Activated CD8-positive, alpha-beta T cell treated with anti-CD3 and anti-CD28 coated beads for 36 hours (primary cell): ENCODE measurements at regions of chr1 and their contacts with region 1.

Region 1: DNA sequence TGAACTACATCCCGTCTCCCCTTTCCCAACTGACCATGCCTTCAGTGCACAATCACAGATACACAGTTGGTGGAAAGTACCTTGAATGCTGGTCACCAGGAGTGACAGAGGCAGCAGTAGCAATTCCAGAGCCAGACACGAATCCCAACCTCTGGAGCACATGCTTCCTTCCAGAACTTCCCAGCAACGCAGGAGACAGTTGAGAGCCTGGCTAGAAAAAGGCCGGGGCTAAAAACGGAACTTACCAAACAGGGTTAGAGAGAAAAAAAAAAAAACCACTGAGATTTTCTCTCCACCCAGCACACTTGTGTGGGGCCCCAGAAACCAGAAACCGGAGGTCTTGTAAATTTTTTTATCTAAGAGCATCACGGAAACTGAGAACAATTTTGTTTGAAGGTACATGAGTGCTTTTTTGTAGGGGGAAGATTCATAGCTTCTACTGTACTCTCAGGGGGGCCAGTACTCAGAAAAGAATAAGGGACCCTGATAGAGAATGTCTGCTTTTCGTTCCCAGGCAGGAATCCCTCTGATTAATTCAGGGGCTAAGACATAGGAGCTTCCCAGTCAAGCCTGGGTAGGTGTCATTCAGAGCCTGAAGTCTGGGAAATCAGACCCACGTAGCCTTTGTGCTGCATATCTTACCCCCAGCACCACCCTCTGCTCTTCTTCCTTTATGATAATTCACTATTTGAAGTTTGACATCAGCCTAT is at the start of gene CD48:
- DNase-seq: peak; percentile 75
- ATAC-seq: peak; percentile 37
- H3K4me3 Mint-ChIP-seq: no peak within 1 kb of the TSS
- H3K27ac Mint-ChIP-seq: no peak within 1 kb of the TSS
- H3K4me1 Mint-ChIP-seq: peaks cover 37% of the 10 kb centered on the region
- H3K27me3 Mint-ChIP-seq: no peaks in the 10 kb centered on the region
- CTCF ChIP-seq: no peak
- total RNA-seq, gene CD48: 379 to 388 TPM

Region 2: GRCh38 chr1:160590488-160590887 is 121.3 kb before region 1 on chr1:
- CTCF ChIA-PET with region 1: no interaction called
- POLR2A ChIA-PET with region 1: no interaction called
- intact Hi-C with region 1: no loop called
- DNase-seq: peak; percentile 38
- ATAC-seq: no peak
- H3K4me3 Mint-ChIP-seq: no peak overlapping the region
- H3K27ac Mint-ChIP-seq: no peak overlapping the region
- H3K4me1 Mint-ChIP-seq: peaks cover 12% of the 10 kb centered on the region
- H3K27me3 Mint-ChIP-seq: no peaks in the 10 kb centered on the region
- CTCF ChIP-seq: no peak

Region 3: DNA sequence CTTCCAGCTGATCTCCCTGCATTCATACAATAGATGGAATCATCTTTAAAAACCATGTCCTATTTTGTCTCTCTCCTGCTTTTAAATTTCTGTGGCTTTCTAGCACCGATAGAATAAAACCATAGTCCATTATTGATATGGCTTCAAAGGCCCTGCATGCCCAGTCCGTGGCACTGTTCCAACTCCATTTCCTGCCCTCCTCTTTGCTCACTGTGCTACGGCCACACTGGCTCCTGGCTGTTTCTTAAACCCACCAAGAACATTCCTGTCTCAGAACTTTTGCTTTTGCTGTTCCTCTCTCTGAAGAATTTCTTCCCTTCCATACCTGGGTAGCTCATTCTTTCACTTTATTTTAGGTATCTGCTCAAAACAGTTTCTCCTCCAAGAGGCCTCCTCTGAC is 72.1 kb before region 1 on chr1:
- CTCF ChIA-PET with region 1: no interaction called
- POLR2A ChIA-PET with region 1: interaction called, 3 read pairs
- intact Hi-C with region 1: loop called (anchors 5 kb)
- DNase-seq: no peak
- ATAC-seq: no peak
- H3K4me3 Mint-ChIP-seq: peak overlapping the region; percentile 74
- H3K27ac Mint-ChIP-seq: peak overlapping the region; percentile 98
- H3K4me1 Mint-ChIP-seq: peaks cover 80% of the 10 kb centered on the region
- H3K27me3 Mint-ChIP-seq: no peaks in the 10 kb centered on the region
- CTCF ChIP-seq: no peak

Region 4: DNA sequence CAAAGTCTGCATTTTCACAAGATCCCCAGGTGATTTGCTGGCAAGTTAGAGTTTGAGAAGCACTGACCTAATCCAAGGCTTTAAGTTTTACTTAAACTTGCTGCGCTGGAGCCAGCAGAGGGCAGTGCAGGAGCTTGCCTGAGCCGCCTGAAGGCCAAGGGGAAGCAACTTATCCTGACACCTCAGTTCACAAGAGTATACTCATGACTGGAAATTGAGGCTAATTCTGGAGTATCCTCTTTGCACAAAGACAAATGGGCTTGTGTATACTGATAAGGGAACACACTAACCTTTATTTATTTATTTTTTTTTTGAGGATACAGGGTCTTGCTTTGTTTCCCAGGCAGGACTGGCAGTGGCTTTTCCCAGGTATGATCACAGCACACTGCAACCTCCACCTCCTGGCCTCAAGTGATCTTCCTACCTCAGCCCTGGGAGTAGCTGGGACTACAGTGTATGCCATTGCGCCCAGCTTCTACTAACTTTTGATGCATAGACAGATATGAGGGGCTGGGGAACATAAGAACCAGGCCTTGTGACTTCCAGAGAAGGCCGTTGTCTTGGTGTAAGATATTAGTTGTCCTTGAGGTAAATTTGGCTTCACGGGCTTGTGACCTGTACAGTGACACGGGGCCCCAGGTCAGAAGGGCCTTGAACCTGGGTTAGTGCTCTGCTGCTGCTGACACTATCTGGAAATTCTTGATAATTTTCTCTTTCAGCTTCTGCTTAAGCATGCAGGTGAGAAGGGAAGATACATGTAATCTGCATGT is 35.9 kb before region 1 on chr1:
- CTCF ChIA-PET with region 1: interaction called, 106 read pairs
- POLR2A ChIA-PET with region 1: interaction called, 21 read pairs
- intact Hi-C with region 1: loop called (anchors 5 kb)
- DNase-seq: peak; percentile 88
- ATAC-seq: peak; percentile 85
- H3K4me3 Mint-ChIP-seq: no peak overlapping the region
- H3K27ac Mint-ChIP-seq: peak overlapping the region; percentile 73
- H3K4me1 Mint-ChIP-seq: peaks cover 30% of the 10 kb centered on the region
- H3K27me3 Mint-ChIP-seq: no peaks in the 10 kb centered on the region
- CTCF ChIP-seq: peak; percentile 73

Region 5: GRCh38 chr1:160681067-160681890 is 30.5 kb before region 1 on chr1:
- CTCF ChIA-PET with region 1: interaction called, 106 read pairs
- POLR2A ChIA-PET with region 1: interaction called, 43 read pairs
- intact Hi-C with region 1: no loop called
- DNase-seq: peak; percentile 96
- ATAC-seq: peak; percentile 74
- H3K4me3 Mint-ChIP-seq: no peak overlapping the region
- H3K27ac Mint-ChIP-seq: peak overlapping the region; percentile 95
- H3K4me1 Mint-ChIP-seq: peaks cover 67% of the 10 kb centered on the region
- H3K27me3 Mint-ChIP-seq: no peaks in the 10 kb centered on the region
- CTCF ChIP-seq: peak; percentile 97

Region 6: GRCh38 chr1:160795951-160796383 is 84.2 kb after region 1 on chr1 and contains the start of gene LY9:
- CTCF ChIA-PET with region 1: interaction called, 7 read pairs
- POLR2A ChIA-PET with region 1: interaction called, 19 read pairs
- intact Hi-C with region 1: no loop called
- DNase-seq: peak; percentile 93
- ATAC-seq: peak; percentile 77
- H3K4me3 Mint-ChIP-seq: peak within 1 kb of the TSS; percentile 87
- H3K27ac Mint-ChIP-seq: peak within 1 kb of the TSS; percentile 95
- H3K4me1 Mint-ChIP-seq: peaks cover 49% of the 10 kb centered on the region
- H3K27me3 Mint-ChIP-seq: no peaks in the 10 kb centered on the region
- CTCF ChIP-seq: no peak
- total RNA-seq, gene LY9: 19.1 to 19.5 TPM